Activated CD4-positive, alpha-beta memory T cell treated with anti-CD3 and anti-CD28 coated beads, Interleukin-2, amount 10 ng/mL, durations not matched to agents 7 days and 5 days (primary cell): ENCODE measurements at regions of chr1 and their contacts with region 1.

Region 1: GRCh38 chr1:10494754-10495474 is 20.2 kb downstream of the PEX14 start:
- DNase-seq: peak; percentile 85
- H3K4me3 Mint-ChIP-seq: peak overlapping the region; percentile 75
- H3K27ac Mint-ChIP-seq: peak overlapping the region; percentile 87
- H3K4me1 Mint-ChIP-seq: peaks cover 52% of the 10 kb centered on the region
- H3K27me3 Mint-ChIP-seq: no peaks in the 10 kb centered on the region

Region 2: DNA sequence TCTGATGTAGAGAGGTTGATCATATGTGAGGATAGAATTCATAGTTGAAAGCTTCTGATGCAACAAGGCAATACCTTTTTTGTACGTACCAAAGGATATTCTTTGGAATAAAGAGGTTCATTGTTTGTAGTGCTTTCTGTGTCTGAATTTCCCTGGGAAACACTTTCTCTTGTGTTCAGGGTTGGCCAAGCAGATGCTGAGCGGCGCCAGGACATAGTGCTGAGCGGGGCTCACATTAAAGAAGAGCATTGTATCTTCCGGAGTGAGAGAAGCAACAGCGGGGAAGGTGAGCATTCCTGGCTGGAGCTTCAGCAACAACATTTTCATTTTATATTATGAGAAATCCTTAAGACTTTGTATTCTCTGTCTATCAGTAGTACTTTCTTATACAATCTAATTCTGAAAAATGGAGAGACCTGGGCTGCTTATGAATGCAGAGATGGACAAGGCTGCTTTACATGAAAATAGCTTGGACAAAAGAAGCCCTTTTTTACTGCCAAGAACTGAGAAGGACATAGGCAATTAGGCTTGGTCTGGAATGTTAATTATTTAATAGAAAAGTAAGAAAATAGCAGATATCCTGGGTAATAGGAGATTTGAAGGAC is 199.3 kb before region 1 on chr1:
- CTCF ChIA-PET with region 1: no interaction called
- POLR2A ChIA-PET with region 1: no interaction called
- DNase-seq: no peak
- H3K4me3 Mint-ChIP-seq: no peak overlapping the region
- H3K27ac Mint-ChIP-seq: no peak overlapping the region
- H3K4me1 Mint-ChIP-seq: peaks cover 3% of the 10 kb centered on the region
- H3K27me3 Mint-ChIP-seq: no peaks in the 10 kb centered on the region

Region 3: GRCh38 chr1:10472220-10473144 is 22.4 kb before region 1 on chr1 and contains the start of gene DFFA:
- CTCF ChIA-PET with region 1: interaction called, 11 read pairs
- POLR2A ChIA-PET with region 1: interaction called, 11 read pairs
- DNase-seq: peak; percentile 94
- H3K4me3 Mint-ChIP-seq: peak within 1 kb of the TSS; percentile 81
- H3K27ac Mint-ChIP-seq: peak within 1 kb of the TSS; percentile 77
- H3K4me1 Mint-ChIP-seq: peaks cover 54% of the 10 kb centered on the region
- H3K27me3 Mint-ChIP-seq: no peaks in the 10 kb centered on the region
- total RNA-seq, gene DFFA: 23.5 to 24.2 TPM

Region 4: DNA sequence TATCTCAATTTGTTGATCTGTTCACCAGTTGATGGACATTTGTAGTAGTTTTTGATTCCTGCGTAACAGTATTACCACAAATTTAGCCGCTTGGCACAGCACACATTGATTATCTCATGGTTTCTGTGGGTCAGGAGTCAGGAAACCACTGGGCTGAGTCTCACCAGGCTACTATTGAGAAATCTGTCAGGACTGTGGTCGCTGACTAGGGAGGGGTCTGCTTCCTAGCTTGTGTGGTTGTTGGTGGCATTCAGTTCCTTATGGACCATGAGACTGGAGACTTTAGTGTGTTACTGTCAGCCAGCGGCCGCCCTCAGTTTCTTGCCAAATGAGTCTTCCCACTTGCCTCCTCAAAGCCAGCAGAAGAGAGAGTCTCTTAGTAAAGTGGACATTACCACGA is 10.4 kb before region 1 on chr1:
- CTCF ChIA-PET with region 1: interaction called, 21 read pairs
- POLR2A ChIA-PET with region 1: interaction called, 9 read pairs
- DNase-seq: no peak
- H3K4me3 Mint-ChIP-seq: no peak overlapping the region
- H3K27ac Mint-ChIP-seq: no peak overlapping the region
- H3K4me1 Mint-ChIP-seq: peaks cover 3% of the 10 kb centered on the region
- H3K27me3 Mint-ChIP-seq: no peaks in the 10 kb centered on the region

Region 5: DNA sequence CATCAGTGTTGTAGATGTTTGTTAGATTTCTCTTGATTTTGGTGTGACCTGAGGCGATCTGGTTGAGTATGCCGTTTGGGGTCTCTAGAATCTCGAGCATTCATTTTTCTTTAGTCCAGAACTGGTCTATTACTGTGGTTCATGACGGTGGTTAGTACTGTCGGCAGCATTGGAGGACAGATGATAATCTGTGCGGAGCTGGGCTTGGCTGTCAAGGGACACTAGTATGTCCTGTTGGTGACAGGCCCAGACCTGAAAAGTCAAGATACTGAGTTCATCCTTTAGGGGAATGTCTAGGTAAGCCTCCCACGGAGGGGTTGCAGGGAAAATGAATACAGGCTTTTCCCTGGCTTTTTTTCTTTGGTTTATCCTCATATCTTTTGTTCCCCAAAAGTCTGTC is 39.6 kb after region 1 on chr1:
- CTCF ChIA-PET with region 1: no interaction called
- POLR2A ChIA-PET with region 1: no interaction called
- DNase-seq: no peak
- H3K4me3 Mint-ChIP-seq: no peak overlapping the region
- H3K27ac Mint-ChIP-seq: no peak overlapping the region
- H3K4me1 Mint-ChIP-seq: peaks cover 14% of the 10 kb centered on the region
- H3K27me3 Mint-ChIP-seq: no peaks in the 10 kb centered on the region

Region 6: DNA sequence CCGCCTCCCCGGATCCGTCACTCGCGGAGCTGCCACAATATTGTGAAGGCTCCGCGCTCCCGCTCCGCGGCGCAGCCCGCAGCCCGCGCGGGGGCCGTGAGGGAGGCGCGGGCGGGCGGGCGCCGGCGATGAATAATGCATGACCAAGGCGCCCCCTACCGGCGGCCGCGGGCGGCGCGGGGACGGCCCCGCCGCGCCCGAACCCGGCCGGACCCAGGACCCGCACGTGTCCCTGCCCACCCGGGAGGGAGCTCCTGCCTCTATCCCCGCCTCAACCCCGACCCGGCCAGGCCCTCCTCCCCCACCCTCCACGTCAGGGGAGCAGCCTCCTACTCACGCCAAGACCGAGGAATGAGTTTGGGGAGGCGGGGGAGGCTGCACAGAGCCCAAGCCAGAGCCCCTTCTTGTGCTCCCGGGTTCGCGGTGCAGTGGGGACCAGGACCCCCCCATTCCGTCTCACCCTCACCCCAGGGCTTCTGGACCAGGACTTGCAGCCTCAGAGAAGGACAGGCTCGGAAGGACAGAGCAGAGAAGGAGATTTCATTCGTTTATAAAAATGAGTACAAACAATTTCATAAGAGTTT is 372.3 kb after region 1 on chr1:
- CTCF ChIA-PET with region 1: interaction called, 15 read pairs
- POLR2A ChIA-PET with region 1: interaction called, 4 read pairs
- DNase-seq: peak; percentile 62
- H3K4me3 Mint-ChIP-seq: no peak overlapping the region
- H3K27ac Mint-ChIP-seq: no peak overlapping the region
- H3K4me1 Mint-ChIP-seq: peaks cover 6% of the 10 kb centered on the region
- H3K27me3 Mint-ChIP-seq: peaks cover 62% of the 10 kb centered on the region

Region 7: DNA sequence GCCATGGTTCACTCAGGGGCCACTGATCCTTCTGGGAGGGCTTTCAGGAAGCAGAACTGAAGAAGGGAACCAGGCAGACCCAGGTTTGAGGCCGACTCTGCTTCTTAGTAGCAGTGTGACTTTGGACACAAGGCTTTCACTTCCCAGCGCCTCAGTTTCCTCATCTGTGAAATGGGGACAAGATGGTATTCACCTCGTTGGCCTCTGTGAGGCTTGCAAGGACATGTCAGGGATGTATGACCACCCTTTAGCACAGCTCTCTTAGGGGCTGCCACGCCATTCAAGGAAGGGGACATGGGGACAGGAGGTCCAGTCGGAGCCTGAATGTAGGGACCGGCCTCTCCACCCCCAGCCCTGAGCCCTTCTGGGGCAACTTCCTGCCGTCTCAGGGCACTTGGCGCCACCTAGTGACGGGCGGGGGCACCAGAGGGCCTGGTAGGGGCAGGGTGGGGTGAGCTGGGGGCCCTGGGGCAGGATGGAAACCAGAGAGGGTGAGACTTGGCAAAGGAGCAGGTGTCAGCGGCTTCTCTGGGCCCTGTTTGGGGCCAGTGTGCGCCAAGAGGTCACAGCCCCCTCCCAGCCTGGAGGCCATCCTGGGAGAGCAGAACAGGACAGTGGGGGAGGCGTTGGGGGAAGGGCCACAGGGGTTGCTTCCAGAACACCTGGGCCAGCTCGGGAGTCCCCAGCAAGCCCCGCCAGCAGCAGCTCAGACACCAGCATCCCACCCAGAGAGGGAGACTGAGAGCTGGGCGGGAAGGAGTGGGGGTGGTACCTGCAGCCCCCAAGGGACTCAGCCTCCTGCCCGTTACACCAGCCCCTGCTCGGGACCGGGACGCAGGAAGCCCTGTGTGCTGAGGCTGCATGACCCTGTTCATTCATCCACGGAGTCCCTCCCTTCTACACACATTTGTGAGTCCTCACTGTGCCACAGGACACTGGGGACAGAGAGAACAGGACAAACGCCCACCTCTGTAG is 415.1 kb after region 1 on chr1:
- CTCF ChIA-PET with region 1: interaction called, 10 read pairs
- POLR2A ChIA-PET with region 1: no interaction called
- DNase-seq: peak; percentile 74
- H3K4me3 Mint-ChIP-seq: no peak overlapping the region
- H3K27ac Mint-ChIP-seq: no peak overlapping the region
- H3K4me1 Mint-ChIP-seq: peaks cover 1% of the 10 kb centered on the region
- H3K27me3 Mint-ChIP-seq: peaks cover 12% of the 10 kb centered on the region